Activated naive CD8-positive, alpha-beta T cell treated with anti-CD3 and anti-CD28 coated beads, Interleukin-2, amount 10 ng/mL, durations not matched to agents 7 days and 5 days (primary cell): ENCODE measurements at regions of chr6 and their contacts with region 1.

Region 1: GRCh38 chr6:31197559-31198305 is 27.2 kb upstream of the POU5F1 start:
- DNase-seq: peak; percentile 88
- ATAC-seq: peak; percentile 76
- H3K4me3 Mint-ChIP-seq: peak overlapping the region; percentile 97
- H3K27ac Mint-ChIP-seq: peak overlapping the region; percentile 100
- H3K4me1 Mint-ChIP-seq: peaks cover 40% of the 10 kb centered on the region
- H3K27me3 Mint-ChIP-seq: no peaks in the 10 kb centered on the region

Region 2: GRCh38 chr6:31094389-31094881 is 103.3 kb before region 1 on chr6:
- POLR2A ChIA-PET with region 1: no interaction called
- DNase-seq: peak; percentile 41
- ATAC-seq: peak; percentile 77
- H3K4me3 Mint-ChIP-seq: peak overlapping the region; percentile 7
- H3K27ac Mint-ChIP-seq: peak overlapping the region; percentile 92
- H3K4me1 Mint-ChIP-seq: peaks cover 18% of the 10 kb centered on the region
- H3K27me3 Mint-ChIP-seq: peaks cover 2% of the 10 kb centered on the region

Region 3: GRCh38 chr6:31158140-31158862 is 39.4 kb before region 1 on chr6 and contains the start of gene TCF19:
- POLR2A ChIA-PET with region 1: interaction called, 10 read pairs
- DNase-seq: peak; percentile 99
- ATAC-seq: peak; percentile 92
- H3K4me3 Mint-ChIP-seq: peak within 1 kb of the TSS; percentile 99
- H3K27ac Mint-ChIP-seq: peak within 1 kb of the TSS; percentile 95
- H3K4me1 Mint-ChIP-seq: peaks cover 29% of the 10 kb centered on the region
- H3K27me3 Mint-ChIP-seq: no peaks in the 10 kb centered on the region
- total RNA-seq, gene TCF19: 81.0 to 83.3 TPM

Region 4: GRCh38 chr6:31271641-31272357 is 74.1 kb after region 1 on chr6 and contains the start of gene HLA-C:
- POLR2A ChIA-PET with region 1: interaction called, 14 read pairs
- DNase-seq: peak; percentile 81
- ATAC-seq: peak; percentile 83
- H3K4me3 Mint-ChIP-seq: peak within 1 kb of the TSS; percentile 97
- H3K27ac Mint-ChIP-seq: peak within 1 kb of the TSS; percentile 100
- H3K4me1 Mint-ChIP-seq: peaks cover 30% of the 10 kb centered on the region
- H3K27me3 Mint-ChIP-seq: peaks cover 4% of the 10 kb centered on the region
- total RNA-seq, gene HLA-C: 1,328 to 1,360 TPM

Region 5: DNA sequence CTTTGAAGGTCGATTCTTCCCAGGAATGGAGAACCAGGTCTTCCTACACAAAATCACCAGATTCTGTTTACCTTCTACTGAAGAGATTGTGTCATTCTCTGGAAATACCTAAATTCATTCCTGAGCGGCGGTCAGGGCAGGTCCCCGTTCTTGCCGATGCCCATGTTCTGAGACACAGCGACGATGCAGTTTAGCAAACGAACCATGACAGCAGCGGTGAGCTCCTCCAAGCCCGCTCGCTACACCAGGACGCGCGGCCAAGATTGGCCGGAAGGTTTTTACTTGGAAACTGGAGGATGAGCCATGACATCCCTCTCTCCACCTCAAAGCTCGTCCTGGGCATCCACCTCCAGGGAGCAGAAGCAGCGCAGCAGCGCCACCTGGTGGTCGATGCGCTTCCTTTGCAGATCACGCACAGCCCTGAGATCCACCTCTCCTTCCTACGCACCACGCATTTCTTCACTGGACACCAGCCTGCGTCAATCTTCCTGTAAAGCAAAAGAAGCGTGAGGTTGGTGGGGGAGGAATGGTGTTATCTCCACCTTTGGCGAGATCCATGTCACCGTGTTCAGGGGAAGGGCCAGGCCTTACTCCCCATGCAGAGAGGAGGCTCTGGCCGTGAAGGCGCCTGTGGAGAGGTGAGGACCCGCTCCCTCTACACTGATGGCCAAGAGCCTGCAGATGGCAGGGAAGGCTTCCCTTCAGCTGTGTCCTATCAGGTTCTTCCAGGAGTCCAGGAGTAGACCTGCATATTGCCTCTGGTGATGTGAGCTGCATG is 169.2 kb after region 1 on chr6:
- POLR2A ChIA-PET with region 1: interaction called, 25 read pairs
- DNase-seq: peak; percentile 93
- ATAC-seq: peak; percentile 99
- H3K4me3 Mint-ChIP-seq: peak overlapping the region; percentile 78
- H3K27ac Mint-ChIP-seq: no peak overlapping the region
- H3K4me1 Mint-ChIP-seq: peaks cover 13% of the 10 kb centered on the region
- H3K27me3 Mint-ChIP-seq: peaks cover 52% of the 10 kb centered on the region